ENCODE measurements at regions of chr1 and their contacts with region 1.

Region 1: GRCh38 chr1:36420836-36421664 is 23.3 kb upstream of the LSM10 start:
- DNase-seq: peak; percentile 80 to 97 (median 92)
- ATAC-seq: peak; percentile 99
- H3K4me3 ChIP-seq: peak overlapping the region; percentile 16
- H3K4me3 Mint-ChIP-seq: peak overlapping the region; percentile 76
- H3K27ac ChIP-seq: peak overlapping the region; percentile 32 to 72
- H3K27ac Mint-ChIP-seq: peak overlapping the region; percentile 81
- H3K4me1 ChIP-seq: peaks cover 26% of the 10 kb centered on the region
- H3K4me1 Mint-ChIP-seq: peaks cover 29% of the 10 kb centered on the region
- H3K27me3 ChIP-seq: no peaks in the 10 kb centered on the region
- H3K27me3 Mint-ChIP-seq: no peaks in the 10 kb centered on the region
- CTCF ChIP-seq: peak; percentile 91

Region 2: DNA sequence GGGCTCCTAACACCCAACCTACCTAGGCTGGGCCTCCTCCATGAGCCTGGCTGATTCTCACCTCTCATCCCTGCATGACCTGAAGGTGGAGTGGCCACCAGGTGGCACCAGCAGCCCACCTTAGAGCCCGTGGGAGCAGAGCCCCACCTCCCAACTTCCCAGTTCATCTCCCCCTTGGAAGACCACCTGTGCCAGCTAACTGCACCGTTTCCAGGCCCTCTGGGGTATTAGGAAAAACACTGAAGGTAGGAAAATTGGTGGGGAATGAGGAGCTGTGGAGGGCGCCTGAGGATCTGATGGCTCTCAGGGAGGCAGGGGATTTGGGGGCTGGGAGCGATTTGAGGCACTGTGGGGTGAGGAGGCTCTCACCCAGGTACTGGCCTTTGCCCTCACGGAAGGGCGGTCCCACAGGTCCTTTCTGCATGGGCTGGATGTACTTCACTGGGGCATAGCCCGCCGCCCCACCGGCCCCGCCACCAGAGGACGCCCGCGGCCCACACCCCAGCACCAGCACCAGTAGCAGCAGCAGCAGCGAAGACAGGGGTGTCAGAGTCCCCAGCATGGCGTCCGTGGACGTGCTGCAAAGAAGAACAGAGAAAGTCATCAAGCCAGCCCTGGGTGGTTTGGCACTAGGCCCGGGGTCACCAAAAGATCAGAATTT is 321.2 kb before region 1 on chr1:
- CTCF ChIA-PET with region 1: no interaction called
- POLR2A ChIA-PET with region 1: no interaction called
- intact Hi-C with region 1: loop called (anchors 1 to 2 kb)
- DNase-seq: peak; percentile 61 to 84 (median 71)
- ATAC-seq: peak; percentile 89
- H3K4me3 ChIP-seq: no peak overlapping the region
- H3K4me3 Mint-ChIP-seq: no peak overlapping the region
- H3K27ac ChIP-seq: no peak overlapping the region
- H3K27ac Mint-ChIP-seq: no peak overlapping the region
- H3K4me1 ChIP-seq: peaks cover 12% of the 10 kb centered on the region
- H3K4me1 Mint-ChIP-seq: no peaks in the 10 kb centered on the region
- H3K27me3 ChIP-seq: no peaks in the 10 kb centered on the region
- H3K27me3 Mint-ChIP-seq: no peaks in the 10 kb centered on the region
- CTCF ChIP-seq: peak; percentile 91

Region 3: GRCh38 chr1:36285448-36286101 is 135.5 kb before region 1 on chr1:
- CTCF ChIA-PET with region 1: interaction called, 5 read pairs
- POLR2A ChIA-PET with region 1: no interaction called
- intact Hi-C with region 1: loop called (anchors 1 to 5 kb)
- DNase-seq: peak; percentile 22 to 92 (median 50)
- ATAC-seq: peak; percentile 99
- H3K4me3 ChIP-seq: no peak overlapping the region
- H3K4me3 Mint-ChIP-seq: no peak overlapping the region
- H3K27ac ChIP-seq: no peak overlapping the region
- H3K27ac Mint-ChIP-seq: peak overlapping the region; percentile 34
- H3K4me1 ChIP-seq: no peaks in the 10 kb centered on the region
- H3K4me1 Mint-ChIP-seq: peaks cover 25% of the 10 kb centered on the region
- H3K27me3 ChIP-seq: no peaks in the 10 kb centered on the region
- H3K27me3 Mint-ChIP-seq: no peaks in the 10 kb centered on the region
- CTCF ChIP-seq: peak; percentile 83

Region 4: DNA sequence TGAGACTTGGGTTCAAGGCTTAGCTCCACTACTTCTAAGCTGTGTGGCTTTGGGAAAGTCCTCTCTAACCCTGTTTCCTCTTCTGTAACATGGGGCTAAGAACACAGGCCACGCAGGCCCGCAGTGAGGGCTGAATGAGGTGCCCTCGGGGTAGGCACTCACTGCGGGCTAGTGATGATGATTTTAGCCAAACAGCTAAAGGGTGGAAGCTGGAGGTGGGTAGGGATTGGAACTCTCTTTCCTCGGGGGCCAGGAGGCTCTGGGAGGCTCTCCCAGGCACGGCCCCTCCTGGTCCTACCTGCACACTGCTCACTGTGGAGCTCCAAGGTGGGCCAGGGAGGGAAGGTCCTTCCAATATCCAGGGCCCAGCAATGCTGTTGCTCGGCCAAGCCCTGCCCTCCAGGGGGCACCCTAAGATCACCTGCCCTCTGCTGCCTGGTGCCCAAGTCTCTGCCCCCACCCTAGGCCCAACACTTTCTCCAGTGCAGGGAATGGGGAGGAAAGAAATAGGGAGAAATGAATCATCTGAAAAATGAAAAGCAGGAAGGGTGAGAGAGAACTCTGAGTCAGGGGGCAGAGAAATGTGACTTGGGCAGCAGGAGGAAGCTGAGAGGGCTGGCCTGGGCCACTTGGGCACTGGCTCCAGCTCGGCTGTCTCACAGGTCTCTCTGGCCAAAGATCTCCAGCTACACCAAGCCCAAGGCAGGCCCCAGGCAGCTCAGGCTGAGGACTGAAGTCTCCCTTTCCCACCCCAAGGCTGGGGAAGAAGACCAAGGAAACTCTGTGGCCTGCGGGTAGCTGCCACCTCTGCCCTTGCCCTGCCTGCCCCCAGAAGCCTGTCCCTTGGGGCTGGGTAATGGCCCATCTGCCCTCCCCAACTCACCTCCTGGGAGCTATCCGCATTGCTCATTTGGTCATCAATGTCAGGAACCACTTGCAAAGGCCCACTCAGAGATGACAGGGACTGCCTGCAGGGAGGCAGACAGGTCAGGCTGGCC is 78.3 kb before region 1 on chr1:
- CTCF ChIA-PET with region 1: interaction called, 22 read pairs
- POLR2A ChIA-PET with region 1: interaction called, 5 read pairs
- intact Hi-C with region 1: loop called (anchors 1 kb)
- DNase-seq: peak; percentile 44 to 83 (median 63)
- ATAC-seq: peak; percentile 92
- H3K4me3 ChIP-seq: no peak overlapping the region
- H3K4me3 Mint-ChIP-seq: no peak overlapping the region
- H3K27ac ChIP-seq: no peak overlapping the region
- H3K27ac Mint-ChIP-seq: peak overlapping the region; percentile 58
- H3K4me1 ChIP-seq: peaks cover 26% of the 10 kb centered on the region
- H3K4me1 Mint-ChIP-seq: peaks cover 19% of the 10 kb centered on the region
- H3K27me3 ChIP-seq: no peaks in the 10 kb centered on the region
- H3K27me3 Mint-ChIP-seq: no peaks in the 10 kb centered on the region
- CTCF ChIP-seq: peak; percentile 79

Region 5: GRCh38 chr1:36385410-36386257 is 35.4 kb before region 1 on chr1 and contains the start of gene STK40:
- CTCF ChIA-PET with region 1: interaction called, 9 read pairs
- POLR2A ChIA-PET with region 1: interaction called, 6 read pairs
- intact Hi-C with region 1: loop called (anchors 5 kb)
- DNase-seq: peak; percentile 97 to 99 (median 98)
- ATAC-seq: peak; percentile 84
- H3K4me3 ChIP-seq: peak within 1 kb of the TSS; percentile 72
- H3K4me3 Mint-ChIP-seq: peak within 1 kb of the TSS; percentile 89
- H3K27ac ChIP-seq: peak within 1 kb of the TSS; percentile 92
- H3K27ac Mint-ChIP-seq: peak within 1 kb of the TSS; percentile 98
- H3K4me1 ChIP-seq: peaks cover 56% of the 10 kb centered on the region
- H3K4me1 Mint-ChIP-seq: peaks cover 59% of the 10 kb centered on the region
- H3K27me3 ChIP-seq: no peaks in the 10 kb centered on the region
- H3K27me3 Mint-ChIP-seq: no peaks in the 10 kb centered on the region
- CTCF ChIP-seq: no peak
- total RNA-seq, gene STK40: 17.8 to 20.7 TPM

Region 6: GRCh38 chr1:36450270-36450918 is 29.3 kb after region 1 on chr1 and contains the start of gene OSCP1:
- CTCF ChIA-PET with region 1: no interaction called
- POLR2A ChIA-PET with region 1: no interaction called
- intact Hi-C with region 1: loop called in 1 of 2 experiments (anchors 2 kb)
- DNase-seq: peak; percentile 63 to 94 (median 80)
- ATAC-seq: peak; percentile 92
- H3K4me3 ChIP-seq: peak within 1 kb of the TSS; percentile 83
- H3K4me3 Mint-ChIP-seq: peak within 1 kb of the TSS; percentile 95
- H3K27ac ChIP-seq: peak within 1 kb of the TSS; percentile 82 to 89
- H3K27ac Mint-ChIP-seq: peak within 1 kb of the TSS; percentile 91
- H3K4me1 ChIP-seq: peaks cover 15% of the 10 kb centered on the region
- H3K4me1 Mint-ChIP-seq: peaks cover 23% of the 10 kb centered on the region
- H3K27me3 ChIP-seq: no peaks in the 10 kb centered on the region
- H3K27me3 Mint-ChIP-seq: no peaks in the 10 kb centered on the region
- CTCF ChIP-seq: no peak
- total RNA-seq, gene OSCP1: 0.82 to 2.4 TPM